ENCODE measurements at regions of chr7 and their contacts with region 1.

Region 1: GRCh38 chr7:156816943-156817572 is 75.9 kb downstream of the LMBR1 start:
- DNase-seq: no peak
- H3K4me3 Mint-ChIP-seq: no peak overlapping the region
- H3K27ac Mint-ChIP-seq: no peak overlapping the region
- H3K4me1 Mint-ChIP-seq: no peaks in the 10 kb centered on the region
- H3K27me3 Mint-ChIP-seq: no peaks in the 10 kb centered on the region

Region 2: DNA sequence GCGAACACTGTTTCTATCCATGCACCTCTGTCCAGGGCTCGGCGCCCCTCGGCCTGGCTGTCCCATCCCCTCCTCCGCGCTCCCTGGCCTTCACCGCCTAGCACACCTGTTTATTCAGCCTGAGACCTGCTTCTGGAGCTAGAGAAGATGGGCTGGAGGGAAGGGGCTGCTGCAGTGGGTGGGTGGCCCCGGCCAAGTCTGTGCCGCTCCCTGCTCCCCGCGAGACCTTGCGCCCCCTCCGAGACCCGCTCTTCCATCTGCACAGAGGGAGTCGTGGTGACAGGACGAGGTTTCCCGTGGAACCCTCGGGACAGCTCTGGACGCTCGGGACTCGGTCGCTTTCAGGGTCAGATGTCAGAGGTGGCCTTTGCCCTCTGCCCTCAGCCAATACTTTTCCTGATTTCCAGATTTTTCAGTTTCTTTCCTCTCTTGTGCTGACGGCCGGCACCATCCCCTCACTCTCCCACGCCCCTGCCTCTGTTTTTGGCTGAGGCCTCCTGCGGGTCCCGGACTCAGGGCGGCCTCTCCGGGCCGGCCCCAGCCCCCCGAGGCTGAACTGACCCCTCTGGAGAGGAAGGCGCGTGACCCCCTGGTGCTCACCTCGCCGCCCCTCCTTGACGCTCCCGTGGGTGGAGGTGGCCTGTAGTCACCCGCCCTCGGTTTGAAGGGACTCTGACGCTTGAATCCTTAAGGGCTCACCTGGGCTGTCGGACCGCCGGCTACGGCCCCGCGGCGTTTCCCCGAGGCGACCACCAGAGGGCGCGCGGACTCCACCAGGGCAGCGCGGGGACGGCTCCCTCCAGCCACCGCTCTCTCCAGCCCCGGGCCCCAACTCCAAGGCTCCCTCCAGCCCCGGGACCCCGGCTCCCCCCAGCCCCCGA is 1020.4 kb before region 1 on chr7:
- CTCF ChIA-PET with region 1: no interaction called
- intact Hi-C with region 1: loop called (anchors 1 kb)
- DNase-seq: peak; percentile 71
- H3K4me3 Mint-ChIP-seq: no peak overlapping the region
- H3K27ac Mint-ChIP-seq: no peak overlapping the region
- H3K4me1 Mint-ChIP-seq: no peaks in the 10 kb centered on the region
- H3K27me3 Mint-ChIP-seq: peaks cover 30% of the 10 kb centered on the region

Measured in activated naive CD4-positive, alpha-beta T cell treated with anti-CD3 and anti-CD28 coated beads for 36 hours (primary cell).